Motor neuron (in vitro differentiated cells): ENCODE measurements at regions of chr1 and their contacts with region 1.

Region 1: GRCh38 chr1:12275369-12275768 is 45.5 kb downstream of the VPS13D start:
- ATAC-seq: peak in 3 of 8 experiments; percentile 46 to 66 (median 50)
- H3K4me3 ChIP-seq: no peak overlapping the region
- H3K27ac ChIP-seq: no peak overlapping the region
- H3K4me1 ChIP-seq: peaks cover 10 to 19% of the 10 kb centered on the region in 2 donors

Region 2: DNA sequence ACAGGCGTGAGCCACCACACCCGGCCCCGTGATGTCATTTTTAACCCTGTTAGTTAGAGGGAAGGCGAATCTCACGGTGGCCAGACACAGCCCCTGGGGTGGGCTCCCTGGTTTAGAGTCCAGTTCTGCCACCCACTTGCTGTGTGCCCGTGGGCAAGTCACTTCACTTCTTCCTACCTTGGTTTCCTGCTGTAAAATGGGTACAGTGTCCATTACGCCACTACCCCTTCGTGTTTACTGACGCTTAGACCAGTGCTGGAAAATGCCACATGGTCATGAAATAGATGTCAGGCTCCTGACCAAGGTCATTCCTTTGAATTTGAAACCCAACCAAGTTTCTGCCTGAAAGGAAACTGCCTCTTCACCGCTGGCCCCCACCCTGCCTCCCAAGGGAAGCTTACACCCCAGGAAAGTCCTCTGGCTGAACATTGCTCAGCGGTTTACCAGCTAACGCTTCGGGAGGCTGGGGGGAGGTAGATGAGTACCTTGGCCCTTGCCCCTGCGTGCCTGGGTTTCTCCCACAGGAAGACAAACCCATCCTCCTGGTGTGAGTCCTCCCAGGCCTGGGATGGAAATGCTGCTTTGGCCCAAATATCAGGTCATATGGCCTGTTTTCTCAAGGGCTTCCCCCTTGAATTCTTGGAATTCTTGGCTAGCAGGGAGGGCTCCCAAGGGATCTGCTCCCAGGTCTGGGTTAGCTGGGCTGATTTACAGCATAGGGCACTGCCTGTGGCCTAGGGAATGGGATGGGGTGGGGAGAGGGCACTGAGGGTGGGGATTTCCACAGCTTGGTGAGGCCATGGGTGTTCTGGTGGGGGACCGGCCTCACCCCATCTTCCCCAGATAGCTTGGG is 361.0 kb after region 1 on chr1:
- in situ Hi-C with region 1: loop called in 1 of 9 experiments (anchors 25 kb)
- ATAC-seq: peak in 2 of 8 experiments; percentile 27 to 39
- H3K4me3 ChIP-seq: no peak overlapping the region
- H3K27ac ChIP-seq: no peak overlapping the region
- H3K4me1 ChIP-seq: no peaks in the 10 kb centered on the region

Region 3: DNA sequence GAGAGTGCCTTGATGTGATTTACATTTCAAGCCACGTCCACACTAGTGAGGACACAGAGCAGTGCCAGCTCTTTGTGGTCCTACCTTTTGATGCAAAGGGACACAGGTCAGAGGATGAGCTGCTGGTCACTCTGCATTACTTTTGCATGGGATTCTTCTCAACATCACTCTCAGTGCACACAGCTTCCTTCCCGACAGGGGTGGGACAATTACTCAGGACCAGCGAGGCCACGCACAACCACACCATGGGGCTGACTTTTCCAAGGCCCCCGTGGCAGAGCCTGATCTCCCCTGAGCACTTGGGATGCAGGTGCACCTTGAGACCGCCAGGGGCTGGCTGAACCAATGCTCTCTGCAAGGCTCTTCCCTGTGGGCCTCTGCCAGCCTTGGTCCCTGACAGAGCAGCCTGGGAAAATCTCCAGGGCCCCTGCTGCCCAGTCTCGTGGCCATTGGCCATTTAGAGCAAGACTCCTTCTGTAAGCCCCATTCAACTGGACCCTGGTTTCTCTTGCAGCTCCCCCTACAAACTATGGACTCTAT is 485.0 kb after region 1 on chr1:
- in situ Hi-C with region 1: loop called in 1 of 9 experiments (anchors 25 kb)
- ATAC-seq: no peak
- H3K4me3 ChIP-seq: no peak overlapping the region
- H3K27ac ChIP-seq: no peak overlapping the region
- H3K4me1 ChIP-seq: no peaks in the 10 kb centered on the region